Panc1 (cell line): ENCODE measurements at regions of chr7 and their contacts with region 1.

Region 1: GRCh38 chr7:44724276-44724675 is 24.4 kb upstream of the ZMIZ2 start:
- DNase-seq: no peak
- ATAC-seq: no peak
- H3K4me3 ChIP-seq: no peak overlapping the region
- H3K27ac ChIP-seq: no peak overlapping the region
- H3K4me1 ChIP-seq: no peaks in the 10 kb centered on the region
- H3K27me3 ChIP-seq: no peaks in the 10 kb centered on the region
- CTCF ChIP-seq: no peak

Region 2: DNA sequence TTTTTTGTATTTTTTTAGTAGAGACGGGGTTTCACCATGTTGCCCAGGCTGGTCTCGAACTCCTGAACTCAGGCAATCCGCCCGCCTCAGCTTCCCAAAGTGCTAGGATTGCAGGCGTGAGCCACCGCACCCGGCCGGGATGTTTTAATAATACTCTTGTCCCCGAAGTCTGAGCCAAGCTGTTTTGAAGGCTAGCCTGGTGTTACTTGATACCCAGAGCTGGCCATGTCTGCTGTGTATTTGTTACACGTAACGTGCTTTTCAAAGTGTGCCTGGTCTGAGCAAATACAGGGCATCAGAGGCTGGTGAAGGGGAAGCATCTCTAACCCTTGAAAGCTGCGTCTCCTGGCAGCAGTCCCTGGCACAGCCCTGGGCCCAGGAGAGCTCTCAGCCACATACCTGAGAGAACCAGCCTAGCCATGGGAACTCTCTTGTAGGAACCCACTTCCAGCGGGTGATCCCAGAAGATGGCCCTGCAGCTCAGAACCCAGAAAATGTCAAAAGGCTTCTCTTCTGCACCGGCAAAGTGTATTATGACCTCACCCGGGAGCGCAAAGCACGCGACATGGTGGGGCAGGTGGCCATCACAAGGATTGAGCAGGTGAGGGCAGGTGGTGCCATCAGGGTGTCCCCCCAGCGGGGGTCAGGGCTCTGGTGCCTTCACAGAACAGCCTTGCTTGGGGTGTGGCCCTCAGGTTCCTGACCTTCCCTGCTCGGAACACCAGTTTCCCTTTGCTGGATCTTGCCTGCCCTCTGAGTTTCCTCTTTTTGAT is 17.3 kb before region 1 on chr7:
- CTCF ChIA-PET with region 1: no interaction called
- POLR2A ChIA-PET with region 1: no interaction called
- in situ Hi-C with region 1: no loop called
- intact Hi-C with region 1: no loop called
- DNase-seq: no peak
- ATAC-seq: no peak
- H3K4me3 ChIP-seq: no peak overlapping the region
- H3K27ac ChIP-seq: no peak overlapping the region
- H3K4me1 ChIP-seq: peaks cover 23% of the 10 kb centered on the region
- H3K27me3 ChIP-seq: no peaks in the 10 kb centered on the region
- CTCF ChIP-seq: no peak

Region 3: GRCh38 chr7:44738051-44738723 is 13.9 kb after region 1 on chr7:
- CTCF ChIA-PET with region 1: interaction called, 12 read pairs
- POLR2A ChIA-PET with region 1: no interaction called
- in situ Hi-C with region 1: no loop called
- intact Hi-C with region 1: no loop called
- DNase-seq: no peak
- ATAC-seq: no peak
- H3K4me3 ChIP-seq: no peak overlapping the region
- H3K27ac ChIP-seq: no peak overlapping the region
- H3K4me1 ChIP-seq: peaks cover 6% of the 10 kb centered on the region; the same call in 1 of the 2 replicates
- H3K27me3 ChIP-seq: no peaks in the 10 kb centered on the region
- CTCF ChIP-seq: no peak